MCF 10A (cell line): ENCODE measurements at regions of chr1 and their contacts with region 1.

Region 1: GRCh38 chr1:160085686-160086455 is 4.5 kb downstream of the KCNJ9 start:
- DNase-seq: peak; percentile 82
- H3K4me3 Mint-ChIP-seq: no peak overlapping the region
- H3K27ac Mint-ChIP-seq: no peak overlapping the region
- H3K4me1 Mint-ChIP-seq: peaks cover 5% of the 10 kb centered on the region
- H3K27me3 Mint-ChIP-seq: peaks cover 24% of the 10 kb centered on the region
- CTCF ChIP-seq: peak; percentile 96

Region 2: DNA sequence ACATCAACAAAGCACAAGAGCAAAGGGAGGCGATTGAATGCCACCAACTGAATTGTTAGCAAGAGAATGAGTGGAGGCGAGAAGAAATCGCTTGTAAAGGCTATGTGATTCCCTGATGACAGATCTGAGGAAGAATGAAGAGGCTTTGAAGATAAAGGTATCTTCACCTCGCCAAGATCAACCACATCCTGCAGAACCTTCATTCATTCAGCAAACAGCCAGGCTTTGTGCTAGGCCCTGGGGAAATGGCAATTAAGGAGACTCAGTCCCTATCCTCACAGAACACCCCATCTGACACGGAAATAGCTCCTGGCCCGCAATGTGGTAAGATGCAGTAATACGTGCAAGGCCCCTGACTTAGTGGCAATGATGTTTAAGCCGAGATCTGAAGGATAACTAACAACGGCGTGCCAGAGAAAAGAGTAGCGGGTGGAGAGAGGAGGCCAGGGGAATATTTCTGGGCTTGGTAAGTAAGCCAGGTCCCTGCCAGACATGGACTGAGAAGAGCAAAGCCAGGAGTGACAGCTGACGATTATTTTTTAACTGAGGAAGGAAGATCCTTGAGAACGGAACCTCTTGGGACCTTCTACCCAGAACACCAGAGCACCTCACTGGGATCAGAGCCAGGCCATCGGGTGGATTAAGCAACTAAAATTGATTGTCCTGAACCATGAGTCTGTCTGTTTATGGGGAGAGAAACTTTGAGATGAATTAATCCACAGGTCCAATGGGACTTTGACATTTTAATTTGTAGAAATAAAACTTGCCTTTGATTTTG is 218.8 kb before region 1 on chr1:
- CTCF ChIA-PET with region 1: no interaction called
- POLR2A ChIA-PET with region 1: no interaction called
- intact Hi-C with region 1: no loop called
- DNase-seq: no peak
- H3K4me3 Mint-ChIP-seq: peak overlapping the region; percentile 40
- H3K27ac Mint-ChIP-seq: peak overlapping the region; percentile 85
- H3K4me1 Mint-ChIP-seq: peaks cover 50% of the 10 kb centered on the region
- H3K27me3 Mint-ChIP-seq: no peaks in the 10 kb centered on the region
- CTCF ChIP-seq: no peak

Region 3: DNA sequence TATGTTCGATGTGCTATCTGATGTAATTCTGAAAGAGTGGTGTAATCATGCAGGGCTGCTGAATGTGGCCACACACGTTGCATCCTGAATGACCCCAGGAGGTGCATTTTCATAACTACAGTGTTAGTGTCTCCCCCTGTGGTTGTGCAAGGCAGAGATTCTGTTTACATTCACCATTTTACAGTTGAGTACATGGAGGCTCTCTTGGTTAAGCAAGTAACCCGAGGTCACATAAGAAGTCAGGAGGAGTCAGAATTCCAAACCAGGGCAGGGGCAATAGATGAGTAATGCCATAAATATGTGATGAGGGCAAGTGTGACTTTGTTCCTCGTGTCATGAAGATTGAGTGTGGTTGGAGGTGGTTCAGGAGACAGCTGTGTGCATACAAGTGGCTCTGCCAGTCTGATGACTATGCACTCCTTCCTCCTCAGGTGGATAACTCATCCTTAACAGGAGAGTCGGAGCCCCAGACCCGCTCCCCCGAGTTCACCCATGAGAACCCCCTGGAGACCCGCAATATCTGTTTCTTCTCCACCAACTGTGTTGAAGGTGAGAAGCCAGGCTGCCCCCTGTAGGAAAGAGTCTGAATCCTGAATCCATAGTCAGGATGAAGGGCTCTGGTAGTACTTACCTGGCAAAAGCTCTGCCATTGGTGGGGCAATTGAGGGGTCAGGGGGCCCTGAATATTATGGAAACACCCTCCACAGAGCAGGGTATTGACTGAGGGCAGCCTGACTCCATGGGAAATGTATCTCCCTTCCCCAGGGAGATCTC is 39.0 kb after region 1 on chr1:
- CTCF ChIA-PET with region 1: interaction called, 10 read pairs
- POLR2A ChIA-PET with region 1: no interaction called
- intact Hi-C with region 1: no loop called
- DNase-seq: peak; percentile 94
- H3K4me3 Mint-ChIP-seq: no peak overlapping the region
- H3K27ac Mint-ChIP-seq: peak overlapping the region; percentile 93
- H3K4me1 Mint-ChIP-seq: peaks cover 41% of the 10 kb centered on the region
- H3K27me3 Mint-ChIP-seq: no peaks in the 10 kb centered on the region
- CTCF ChIP-seq: peak; percentile 36

Region 4: GRCh38 chr1:160205242-160206035 is 119.6 kb after region 1 on chr1 and contains the start of gene PEA15:
- CTCF ChIA-PET with region 1: interaction called, 10 read pairs
- POLR2A ChIA-PET with region 1: no interaction called
- intact Hi-C with region 1: no loop called
- DNase-seq: peak; percentile 75
- H3K4me3 Mint-ChIP-seq: peak within 1 kb of the TSS; percentile 82
- H3K27ac Mint-ChIP-seq: peak within 1 kb of the TSS; percentile 17
- H3K4me1 Mint-ChIP-seq: peaks cover 25% of the 10 kb centered on the region
- H3K27me3 Mint-ChIP-seq: no peaks in the 10 kb centered on the region
- CTCF ChIP-seq: no peak
- total RNA-seq, gene PEA15: 183 and 198 TPM in 2 replicates

Region 5: GRCh38 chr1:160226623-160227022 is 140.8 kb after region 1 on chr1:
- CTCF ChIA-PET with region 1: interaction called, 21 read pairs
- POLR2A ChIA-PET with region 1: no interaction called
- intact Hi-C with region 1: no loop called
- DNase-seq: no peak
- H3K4me3 Mint-ChIP-seq: no peak overlapping the region
- H3K27ac Mint-ChIP-seq: no peak overlapping the region
- H3K4me1 Mint-ChIP-seq: no peaks in the 10 kb centered on the region
- H3K27me3 Mint-ChIP-seq: no peaks in the 10 kb centered on the region
- CTCF ChIP-seq: no peak

Region 6: DNA sequence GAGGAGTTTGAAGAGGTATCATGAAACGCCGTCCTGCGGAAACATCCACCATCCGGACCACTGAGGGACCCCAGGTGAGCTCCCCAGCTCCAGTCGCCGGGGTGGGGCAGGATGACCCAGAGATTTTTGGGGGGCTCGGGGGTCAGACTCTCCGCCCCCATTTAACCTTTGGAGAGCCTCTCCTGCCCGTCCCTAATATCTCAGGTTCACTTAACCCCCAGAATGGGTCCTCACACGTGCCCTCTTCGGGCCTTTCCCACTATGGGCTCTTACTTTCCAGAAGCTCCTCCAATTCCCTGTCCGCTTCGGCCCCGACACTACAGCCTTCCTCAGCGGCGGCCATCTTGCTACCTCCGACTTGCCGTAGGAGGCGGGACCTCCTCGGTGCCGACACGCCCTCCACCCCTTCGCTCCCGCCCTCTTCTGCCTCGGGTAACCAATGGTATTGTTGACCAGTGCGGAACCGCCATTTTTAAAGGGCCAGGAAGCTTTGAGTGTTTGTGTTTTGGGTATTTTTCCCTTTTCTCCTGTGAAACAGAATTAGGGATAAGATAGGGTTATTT is 199.0 kb after region 1 on chr1 and contains the start of gene PEX19:
- CTCF ChIA-PET with region 1: interaction called, 12 read pairs
- POLR2A ChIA-PET with region 1: interaction called, 5 read pairs
- intact Hi-C with region 1: no loop called
- DNase-seq: peak; percentile 97
- H3K4me3 Mint-ChIP-seq: peak within 1 kb of the TSS; percentile 100
- H3K27ac Mint-ChIP-seq: peak within 1 kb of the TSS; percentile 99
- H3K4me1 Mint-ChIP-seq: peaks cover 19% of the 10 kb centered on the region
- H3K27me3 Mint-ChIP-seq: no peaks in the 10 kb centered on the region
- CTCF ChIP-seq: no peak
- total RNA-seq, gene PEX19: 61.2 and 73.2 TPM in 2 replicates

Region 7: DNA sequence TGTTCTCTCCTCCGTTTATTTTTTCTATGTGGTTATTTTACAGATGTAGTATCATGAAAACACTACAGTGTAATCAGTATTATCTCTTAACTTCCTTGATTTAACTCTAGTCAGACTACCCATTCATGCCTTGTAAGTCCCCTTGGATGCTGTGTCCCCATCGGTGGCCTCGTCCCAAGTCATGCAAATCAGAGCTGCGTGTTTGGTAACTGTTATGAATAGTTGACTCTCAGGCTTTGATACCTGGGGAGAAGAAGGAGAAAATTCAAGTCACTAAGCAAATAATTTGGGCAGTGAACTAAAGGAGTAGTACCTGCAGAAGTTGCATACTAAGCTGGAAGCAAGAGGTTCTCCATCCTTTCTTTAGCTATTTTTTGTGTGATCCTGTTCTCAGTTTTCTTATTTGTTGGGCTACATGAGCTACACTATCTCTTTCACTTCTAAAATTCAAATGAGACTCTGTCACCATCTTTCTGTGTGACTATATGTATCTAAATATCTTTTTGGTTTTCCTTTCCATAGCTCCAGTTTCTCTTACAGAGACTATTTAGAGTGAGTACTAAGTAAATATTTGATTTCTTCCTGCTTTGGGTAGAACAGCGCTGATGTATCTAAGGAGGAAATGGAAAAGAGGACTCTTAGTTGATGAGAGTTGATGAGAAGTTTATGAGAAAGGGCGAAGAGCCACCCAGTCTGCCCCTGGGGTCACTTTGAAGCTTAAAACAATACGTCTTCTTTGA is 365.4 kb after region 1 on chr1:
- CTCF ChIA-PET with region 1: no interaction called
- POLR2A ChIA-PET with region 1: no interaction called
- intact Hi-C with region 1: no loop called
- DNase-seq: no peak
- H3K4me3 Mint-ChIP-seq: no peak overlapping the region
- H3K27ac Mint-ChIP-seq: no peak overlapping the region
- H3K4me1 Mint-ChIP-seq: no peaks in the 10 kb centered on the region
- H3K27me3 Mint-ChIP-seq: peaks cover 28% of the 10 kb centered on the region
- CTCF ChIP-seq: no peak